Naive thymus-derived CD4-positive, alpha-beta T cell (primary cell): ENCODE measurements at regions of chr11 and their contacts with region 1.

Region 1: DNA sequence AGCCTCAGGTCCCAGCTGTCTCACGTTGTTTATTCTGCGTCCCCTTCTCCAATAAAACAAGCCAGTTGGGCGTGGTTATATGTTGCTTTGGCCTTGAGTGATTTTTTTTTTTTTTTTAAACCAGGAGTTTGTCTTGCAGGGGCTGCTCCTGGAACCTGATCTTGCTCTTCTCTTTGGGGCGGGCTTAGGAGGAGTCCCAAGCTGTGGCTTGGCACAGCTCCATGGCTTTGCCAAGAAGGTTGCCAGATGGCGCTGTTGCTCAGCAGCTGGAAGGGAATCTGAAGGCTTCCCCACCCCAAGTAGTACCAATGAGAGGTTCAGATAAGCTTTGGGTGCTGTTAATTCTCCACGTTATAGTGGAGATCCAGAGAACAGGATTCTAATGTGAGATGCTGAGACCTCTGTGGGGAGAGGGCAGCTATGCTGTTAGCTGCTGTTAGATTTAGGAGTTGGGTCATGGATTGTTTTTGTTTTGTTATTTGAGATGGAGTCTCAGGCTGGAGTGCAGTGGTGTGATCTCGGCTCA is 2.0 kb upstream of the FERMT3 start:
- DNase-seq: peak; percentile 61 to 89 (median 83)
- ATAC-seq: peak; percentile 75
- H3K4me3 ChIP-seq: no peak overlapping the region
- H3K4me3 Mint-ChIP-seq: peak overlapping the region; percentile 27 to 87 (median 68)
- H3K27ac ChIP-seq: no peak overlapping the region
- H3K27ac Mint-ChIP-seq: peak overlapping the region; percentile 43 to 98 (median 86)
- H3K4me1 ChIP-seq: peaks cover 28 to 32% of the 10 kb centered on the region in 2 donors
- H3K4me1 Mint-ChIP-seq: peaks cover 25 to 51% (median 36%) of the 10 kb centered on the region in 7 donors
- H3K27me3 ChIP-seq: no peaks in the 10 kb centered on the region
- H3K27me3 Mint-ChIP-seq: no peaks in the 10 kb centered on the region

Region 2: GRCh38 chr11:62737196-62737595 is 1467.3 kb before region 1 on chr11:
- CTCF ChIA-PET with region 1: no interaction called
- POLR2A ChIA-PET with region 1: no interaction called
- intact Hi-C with region 1: no loop called
- DNase-seq: no peak
- ATAC-seq: no peak
- H3K4me3 ChIP-seq: no peak overlapping the region
- H3K4me3 Mint-ChIP-seq: no peak overlapping the region
- H3K27ac ChIP-seq: no peak overlapping the region
- H3K27ac Mint-ChIP-seq: no peak overlapping the region
- H3K4me1 ChIP-seq: peaks cover 0 to 9% of the 10 kb centered on the region in 2 donors
- H3K4me1 Mint-ChIP-seq: peaks cover 0 to 9% (median 7%) of the 10 kb centered on the region in 7 donors
- H3K27me3 ChIP-seq: no peaks in the 10 kb centered on the region
- H3K27me3 Mint-ChIP-seq: no peaks in the 10 kb centered on the region

Region 3: DNA sequence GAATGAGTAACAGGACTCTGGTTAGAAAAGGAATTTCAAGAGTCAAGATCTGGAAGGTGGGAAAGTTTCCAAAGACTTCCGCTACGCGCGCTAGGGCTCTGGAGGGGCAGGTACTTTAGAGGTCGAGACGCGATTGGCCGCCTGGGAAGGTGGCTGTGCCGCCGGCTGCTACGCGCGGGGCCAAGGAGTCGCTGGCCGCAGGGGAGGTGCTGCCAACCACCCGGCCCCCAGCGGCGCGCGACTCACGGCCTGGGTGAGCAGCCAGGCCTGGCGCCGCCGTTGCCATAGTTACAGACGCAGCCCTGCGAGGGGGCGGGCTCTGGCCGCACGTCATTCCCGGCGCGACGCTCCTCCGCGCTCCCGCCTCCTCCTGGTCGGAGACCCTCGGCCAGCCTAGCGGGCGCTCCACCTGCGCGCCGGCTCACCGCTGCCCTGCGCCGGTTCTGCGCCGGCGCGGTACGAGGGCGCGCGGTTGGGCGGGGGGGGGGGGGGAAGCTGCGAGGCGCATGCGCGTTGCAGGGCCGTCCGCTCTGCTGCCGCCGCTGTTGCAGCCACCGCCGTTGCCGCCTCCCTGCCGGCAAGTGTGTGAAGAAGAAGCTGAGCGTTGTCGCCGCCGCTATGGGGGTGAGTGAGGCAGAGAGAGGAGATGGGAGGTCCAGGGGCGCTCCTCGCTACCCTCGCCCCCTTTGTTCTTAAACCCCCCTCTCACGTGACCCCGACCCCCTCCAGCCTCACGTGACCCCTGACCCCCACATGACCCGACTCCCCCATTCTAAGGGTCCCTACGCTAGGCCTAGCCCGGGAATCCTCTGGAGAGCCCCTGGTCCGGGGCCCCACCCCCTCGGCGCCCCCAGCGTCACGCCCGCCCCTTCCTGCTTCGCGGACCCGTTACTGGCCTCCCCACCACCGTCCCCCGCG is 265.8 kb before region 1 on chr11 and contains the start of gene NAA40:
- CTCF ChIA-PET with region 1: no interaction called
- POLR2A ChIA-PET with region 1: no interaction called
- intact Hi-C with region 1: no loop called
- DNase-seq: peak; percentile 78 to 91 (median 84)
- ATAC-seq: peak; percentile 92
- H3K4me3 ChIP-seq: peak within 1 kb of the TSS; percentile 84
- H3K4me3 Mint-ChIP-seq: peak within 1 kb of the TSS; percentile 80 to 99 (median 94)
- H3K27ac ChIP-seq: peak within 1 kb of the TSS; percentile 73
- H3K27ac Mint-ChIP-seq: peak within 1 kb of the TSS; percentile 81 to 95 (median 89)
- H3K4me1 ChIP-seq: peaks cover 11 to 18% of the 10 kb centered on the region in 2 donors
- H3K4me1 Mint-ChIP-seq: peaks cover 22 to 28% (median 27%) of the 10 kb centered on the region in 7 donors
- H3K27me3 ChIP-seq: no peaks in the 10 kb centered on the region
- H3K27me3 Mint-ChIP-seq: peaks cover 0 to 2% (median 0%) of the 10 kb centered on the region in 5 donors
- total RNA-seq, gene NAA40: 21.0 to 39.8 (median 24.8) TPM

Region 4: DNA sequence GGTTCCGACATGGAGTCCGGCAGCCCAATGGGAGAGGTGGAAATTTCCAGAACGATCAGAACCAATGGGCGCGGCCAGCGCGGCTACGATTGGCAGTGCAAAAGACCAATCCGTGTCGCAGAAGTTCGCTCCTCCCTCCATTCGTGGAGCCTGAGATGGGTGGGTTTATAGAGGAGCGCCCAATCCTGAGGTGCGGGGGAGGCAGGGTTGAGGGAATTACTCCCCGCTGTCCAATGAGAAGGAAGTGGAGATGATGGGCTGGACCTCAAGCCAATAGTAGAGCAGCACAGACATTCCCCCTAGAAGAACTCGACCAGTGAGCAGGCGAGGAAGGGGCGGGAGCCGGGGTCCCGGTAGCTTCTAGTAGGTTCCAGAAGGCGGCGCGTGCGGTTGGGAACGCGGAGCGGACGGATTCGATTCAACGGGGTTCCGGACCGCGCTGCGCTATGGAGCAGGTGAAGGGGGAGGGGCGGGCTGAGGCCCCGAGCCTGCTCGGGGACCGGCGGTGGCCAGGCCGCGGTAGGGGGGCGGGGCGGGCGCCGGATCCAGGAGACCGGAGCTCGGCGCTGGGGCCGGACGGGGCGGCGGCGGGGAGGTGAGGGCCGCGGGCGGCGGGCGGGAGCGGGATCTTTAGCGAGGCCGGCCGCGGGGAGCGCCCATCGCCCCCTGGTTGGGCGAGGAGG is 18.6 kb before region 1 on chr11 and contains the start of gene STIP1:
- CTCF ChIA-PET with region 1: interaction called, 37 read pairs
- POLR2A ChIA-PET with region 1: interaction called, 63 read pairs
- intact Hi-C with region 1: loop called (anchors 1 kb)
- DNase-seq: peak; percentile 87 to 100 (median 99)
- ATAC-seq: peak; percentile 92
- H3K4me3 ChIP-seq: peak within 1 kb of the TSS; percentile 84
- H3K4me3 Mint-ChIP-seq: peak within 1 kb of the TSS in 9 of 10 donors; percentile 88 to 99 (median 96)
- H3K27ac ChIP-seq: peak within 1 kb of the TSS; percentile 82
- H3K27ac Mint-ChIP-seq: peak within 1 kb of the TSS in 7 of 9 donors; percentile 89 to 99 (median 92)
- H3K4me1 ChIP-seq: peaks cover 11 to 28% of the 10 kb centered on the region in 2 donors
- H3K4me1 Mint-ChIP-seq: peaks cover 19 to 58% (median 46%) of the 10 kb centered on the region in 7 donors
- H3K27me3 ChIP-seq: no peaks in the 10 kb centered on the region
- H3K27me3 Mint-ChIP-seq: peaks cover 0 to 6% (median 0%) of the 10 kb centered on the region in 5 donors
- total RNA-seq, gene STIP1: 45.1 to 243 (median 88.8) TPM

Region 5: GRCh38 chr11:64225612-64226506 is 21.3 kb after region 1 on chr11 and contains the starts of genes NUDT22 and TRPT1:
- CTCF ChIA-PET with region 1: interaction called, 66 read pairs
- POLR2A ChIA-PET with region 1: interaction called, 220 read pairs
- intact Hi-C with region 1: loop called (anchors 1 kb)
- DNase-seq: peak; percentile 81 to 97 (median 86)
- ATAC-seq: peak; percentile 82
- H3K4me3 ChIP-seq: peak within 1 kb of the TSS; percentile 60
- H3K4me3 Mint-ChIP-seq: peak within 1 kb of the TSS; percentile 87 to 96 (median 92)
- H3K27ac ChIP-seq: peak within 1 kb of the TSS; percentile 89
- H3K27ac Mint-ChIP-seq: peak within 1 kb of the TSS; percentile 76 to 97 (median 90)
- H3K4me1 ChIP-seq: peaks cover 28 to 34% of the 10 kb centered on the region in 2 donors
- H3K4me1 Mint-ChIP-seq: peaks cover 15 to 46% (median 34%) of the 10 kb centered on the region in 7 donors
- H3K27me3 ChIP-seq: no peaks in the 10 kb centered on the region
- H3K27me3 Mint-ChIP-seq: no peaks in the 10 kb centered on the region
- total RNA-seq, gene NUDT22: 47.8 to 94.0 (median 78.3) TPM
- total RNA-seq, gene TRPT1: 24.0 to 53.0 (median 27.2) TPM

Region 6: GRCh38 chr11:64246871-64247728 is 42.6 kb after region 1 on chr11 and contains the start of gene PPP1R14B:
- CTCF ChIA-PET with region 1: interaction called, 31 read pairs
- POLR2A ChIA-PET with region 1: interaction called, 58 read pairs
- intact Hi-C with region 1: loop called in 1 of 2 experiments (anchors 1 kb)
- DNase-seq: peak; percentile 55 to 88 (median 70)
- ATAC-seq: peak; percentile 75
- H3K4me3 ChIP-seq: peak within 1 kb of the TSS; percentile 100
- H3K4me3 Mint-ChIP-seq: peak within 1 kb of the TSS; percentile 83 to 93 (median 88)
- H3K27ac ChIP-seq: peak within 1 kb of the TSS; percentile 64
- H3K27ac Mint-ChIP-seq: peak within 1 kb of the TSS; percentile 65 to 88 (median 85)
- H3K4me1 ChIP-seq: peaks cover 25 to 27% of the 10 kb centered on the region in 2 donors
- H3K4me1 Mint-ChIP-seq: peaks cover 7 to 46% (median 32%) of the 10 kb centered on the region in 7 donors
- H3K27me3 ChIP-seq: no peaks in the 10 kb centered on the region
- H3K27me3 Mint-ChIP-seq: peaks cover 0 to 3% (median 0%) of the 10 kb centered on the region in 5 donors
- total RNA-seq, gene PPP1R14B: 20.1 to 116 (median 26.0) TPM

Region 7: DNA sequence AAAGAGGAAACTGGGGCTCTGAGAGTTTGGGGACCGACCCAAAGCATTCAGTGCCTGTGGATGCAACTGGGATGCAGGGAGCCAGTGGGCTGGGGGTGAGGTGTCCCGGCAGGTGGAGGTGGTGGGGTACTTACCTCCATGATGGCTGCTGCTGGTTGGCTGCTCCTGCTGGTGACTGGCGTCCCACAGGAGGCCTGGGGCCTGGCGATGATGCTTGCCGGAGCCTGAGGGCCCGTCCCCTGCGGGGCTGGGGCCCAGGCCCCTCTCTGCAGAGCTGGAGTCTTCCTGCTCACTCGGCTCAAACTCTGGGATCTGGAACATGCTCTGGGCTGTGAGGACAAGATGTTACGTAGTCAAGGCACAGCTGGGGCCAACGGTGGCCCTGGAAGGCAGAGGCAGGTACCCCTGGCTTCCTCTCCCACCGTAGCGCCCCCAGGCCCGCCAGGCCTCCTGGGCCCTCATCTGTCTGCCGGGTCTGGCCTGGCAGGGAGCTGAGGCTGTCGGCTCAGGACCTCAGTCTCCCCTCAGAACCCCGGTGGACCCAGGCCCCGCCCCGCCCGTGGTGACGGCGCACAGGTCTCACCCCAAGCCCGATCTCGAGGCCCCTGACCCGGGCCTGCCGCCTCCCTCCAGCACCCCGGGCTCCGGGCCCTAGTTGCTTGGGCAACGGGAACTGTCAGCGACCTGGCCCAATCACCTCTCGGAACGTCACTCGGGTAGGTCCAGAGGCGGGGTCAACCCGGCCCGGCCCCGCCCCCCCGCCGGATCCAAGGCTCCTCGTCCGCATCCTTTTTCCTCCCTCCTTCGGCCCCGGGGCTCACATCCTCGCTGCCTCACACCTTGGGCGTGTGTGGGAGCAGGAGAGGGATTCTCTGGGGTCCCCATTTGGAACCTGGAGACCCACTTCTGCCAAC is 79.8 kb after region 1 on chr11 and contains the start of gene BAD:
- CTCF ChIA-PET with region 1: interaction called, 5 read pairs
- POLR2A ChIA-PET with region 1: interaction called, 17 read pairs
- intact Hi-C with region 1: loop called (anchors 1 to 5 kb)
- DNase-seq: peak; percentile 77 to 92 (median 87)
- ATAC-seq: peak; percentile 87
- H3K4me3 ChIP-seq: peak within 1 kb of the TSS; percentile 100
- H3K4me3 Mint-ChIP-seq: peak within 1 kb of the TSS; percentile 84 to 93 (median 89)
- H3K27ac ChIP-seq: peak within 1 kb of the TSS; percentile 99
- H3K27ac Mint-ChIP-seq: peak within 1 kb of the TSS; percentile 81 to 98 (median 95)
- H3K4me1 ChIP-seq: peaks cover 11 to 17% of the 10 kb centered on the region in 2 donors
- H3K4me1 Mint-ChIP-seq: peaks cover 8 to 25% (median 18%) of the 10 kb centered on the region in 7 donors
- H3K27me3 ChIP-seq: no peaks in the 10 kb centered on the region
- H3K27me3 Mint-ChIP-seq: no peaks in the 10 kb centered on the region
- total RNA-seq, gene BAD: 17.5 to 41.1 (median 22.7) TPM

Region 8: DNA sequence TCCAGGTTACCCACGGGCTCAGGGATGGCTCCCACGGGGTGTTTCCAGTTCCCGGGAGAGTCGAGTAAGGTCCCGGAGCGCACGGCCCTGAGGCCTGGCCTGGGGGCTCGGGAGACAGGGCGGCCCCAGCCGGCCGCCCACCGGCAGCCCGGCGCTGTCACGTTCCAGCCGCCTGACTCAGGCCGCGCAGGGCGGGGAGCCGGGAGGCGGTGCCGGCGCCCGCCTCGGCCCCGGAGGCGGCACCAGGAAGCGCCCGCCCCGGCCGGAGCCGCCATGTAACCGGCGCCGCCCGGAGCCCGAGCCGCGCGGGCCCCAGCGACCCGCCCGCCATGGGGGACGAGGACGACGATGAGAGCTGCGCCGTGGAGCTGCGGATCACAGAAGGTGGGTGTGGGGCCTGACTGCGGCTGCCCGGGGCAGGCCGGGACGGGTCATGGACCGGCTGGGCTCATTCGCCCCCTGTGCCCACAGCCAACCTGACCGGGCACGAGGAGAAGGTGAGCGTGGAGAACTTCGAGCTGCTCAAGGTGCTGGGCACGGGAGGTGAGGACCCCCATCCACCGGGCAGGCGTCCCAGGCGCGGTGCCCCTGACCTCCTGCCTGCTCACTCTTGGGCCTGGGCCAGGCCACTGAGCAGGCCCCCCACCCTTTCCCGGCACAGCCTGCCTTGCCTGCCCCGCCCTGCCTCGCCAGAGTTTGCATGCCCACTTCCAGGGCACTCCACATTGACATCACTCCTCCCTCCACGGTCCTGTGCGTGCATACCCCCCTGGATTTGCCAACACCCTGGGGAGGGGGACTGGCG is 154.6 kb after region 1 on chr11 and contains the start of gene RPS6KA4:
- CTCF ChIA-PET with region 1: interaction called, 6 read pairs
- POLR2A ChIA-PET with region 1: no interaction called
- intact Hi-C with region 1: loop called in 1 of 2 experiments (anchors 5 kb)
- DNase-seq: peak in 7 of 9 donors; percentile 25 to 79 (median 36)
- ATAC-seq: peak; percentile 80
- H3K4me3 ChIP-seq: peak within 1 kb of the TSS; percentile 60
- H3K4me3 Mint-ChIP-seq: peak within 1 kb of the TSS; percentile 83 to 100 (median 91)
- H3K27ac ChIP-seq: peak within 1 kb of the TSS; percentile 68
- H3K27ac Mint-ChIP-seq: peak within 1 kb of the TSS; percentile 56 to 94 (median 72)
- H3K4me1 ChIP-seq: peaks cover 10 to 16% of the 10 kb centered on the region in 2 donors
- H3K4me1 Mint-ChIP-seq: peaks cover 16 to 40% (median 30%) of the 10 kb centered on the region in 7 donors
- H3K27me3 ChIP-seq: no peaks in the 10 kb centered on the region
- H3K27me3 Mint-ChIP-seq: no peaks in the 10 kb centered on the region
- total RNA-seq, gene RPS6KA4: 14.2 to 35.7 (median 27.9) TPM

Region 9: DNA sequence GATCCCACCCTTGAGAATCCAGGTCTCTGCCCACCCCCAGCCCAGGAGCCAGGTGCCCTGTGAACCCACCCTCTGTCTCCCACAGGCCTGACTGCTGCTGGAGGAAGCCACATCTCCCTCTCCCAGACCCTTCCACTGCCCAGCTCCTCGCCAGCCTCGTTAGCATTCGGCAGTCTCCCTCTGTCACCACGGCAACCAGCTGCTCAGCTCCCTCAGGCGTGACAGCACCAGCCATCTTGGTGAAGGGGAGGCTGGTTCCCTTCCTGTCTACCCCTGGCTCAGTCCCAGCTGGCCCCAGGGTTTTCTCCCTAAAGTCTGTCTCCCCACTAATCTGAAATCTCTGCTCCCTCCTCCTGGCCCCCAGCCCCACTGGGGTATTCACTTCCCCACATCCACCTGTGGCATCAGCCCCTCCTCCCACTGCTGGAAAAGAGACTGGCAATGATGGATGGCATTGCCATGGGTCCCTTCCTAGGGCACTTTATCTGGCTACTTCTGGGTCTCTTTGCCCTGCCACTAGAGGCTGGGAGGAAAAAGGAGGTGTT is 490.4 kb after region 1 on chr11:
- CTCF ChIA-PET with region 1: no interaction called
- POLR2A ChIA-PET with region 1: no interaction called
- intact Hi-C with region 1: no loop called
- DNase-seq: no peak
- ATAC-seq: no peak
- H3K4me3 ChIP-seq: no peak overlapping the region
- H3K4me3 Mint-ChIP-seq: no peak overlapping the region
- H3K27ac ChIP-seq: no peak overlapping the region
- H3K27ac Mint-ChIP-seq: peak overlapping the region in 1 of 9 donors; percentile 70
- H3K4me1 ChIP-seq: no peaks in the 10 kb centered on the region
- H3K4me1 Mint-ChIP-seq: peaks cover 5 to 13% (median 10%) of the 10 kb centered on the region in 7 donors
- H3K27me3 ChIP-seq: peaks cover 2 to 6% of the 10 kb centered on the region in 2 donors
- H3K27me3 Mint-ChIP-seq: peaks cover 16 to 55% (median 34%) of the 10 kb centered on the region in 5 donors